Keratinocyte (primary cell): ENCODE measurements at regions of chr6 and their contacts with region 1.

Region 1: DNA sequence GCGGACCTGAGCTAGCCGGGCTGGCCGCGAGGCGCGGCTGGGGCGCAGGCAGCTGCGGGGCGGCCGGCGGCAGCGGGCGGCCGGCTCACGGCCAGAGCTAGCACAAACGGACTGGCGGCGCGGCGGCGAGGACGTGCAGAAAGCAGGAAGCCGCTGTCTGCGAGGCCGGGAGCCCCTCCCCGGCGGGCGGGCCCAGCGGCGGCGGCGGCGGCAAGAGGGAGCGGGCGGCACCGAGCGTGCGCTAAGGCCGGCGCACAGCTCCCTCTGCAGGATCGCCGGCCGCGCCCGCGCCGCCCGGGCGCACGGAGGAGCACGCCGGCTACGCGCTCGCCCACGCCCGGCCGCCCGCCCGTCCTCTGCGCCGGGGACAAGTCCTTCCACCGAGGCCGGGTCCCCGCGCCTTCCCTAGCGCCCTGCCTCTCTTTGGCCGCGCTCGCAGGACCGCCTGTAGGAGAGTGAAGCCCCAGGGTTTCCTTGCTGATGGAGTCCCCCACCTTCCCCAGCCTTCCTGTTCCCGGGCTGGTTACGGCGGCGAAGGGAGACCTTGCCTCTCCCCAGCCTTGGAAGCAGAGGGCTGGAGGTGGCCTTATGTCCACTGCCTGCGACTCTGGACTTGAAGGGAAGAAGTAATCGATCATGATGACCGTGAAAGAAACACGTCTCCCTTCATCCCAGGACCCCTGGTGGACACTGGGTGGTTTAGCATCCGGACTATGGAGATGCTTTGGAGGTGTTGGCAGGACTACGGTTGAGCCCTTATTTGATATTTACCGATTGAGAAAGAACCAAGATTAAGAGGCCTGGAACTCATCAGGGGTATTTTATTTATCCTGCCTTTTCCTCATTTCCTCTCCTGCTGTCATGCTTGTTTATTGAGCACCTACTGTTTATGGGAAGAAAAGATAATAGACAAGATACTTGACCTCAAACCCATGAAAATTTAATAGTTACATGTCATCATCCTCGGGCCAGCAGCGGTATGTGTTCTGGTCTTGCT is at the start of gene PREP:
- DNase-seq: no peak
- H3K4me3 ChIP-seq: peak within 1 kb of the TSS; percentile 79 to 92 (median 92)
- H3K27ac ChIP-seq: peak within 1 kb of the TSS; percentile 64
- H3K4me1 ChIP-seq: peaks cover 37% of the 10 kb centered on the region
- H3K27me3 ChIP-seq: no peaks in the 10 kb centered on the region
- CTCF ChIP-seq: peak; percentile 83 to 96 (median 83)
- polyA plus RNA-seq, gene PREP: 34.5 to 75.6 TPM (median 48.3 TPM) in 3 replicates

Region 2: GRCh38 chr6:105087571-105088211 is 315.5 kb before region 1 on chr6:
- dilution Hi-C with region 1: loop called (anchors 25 kb)
- DNase-seq: peak; percentile 15
- H3K4me3 ChIP-seq: no peak overlapping the region
- H3K27ac ChIP-seq: no peak overlapping the region
- H3K4me1 ChIP-seq: peaks cover 3% of the 10 kb centered on the region
- H3K27me3 ChIP-seq: no peaks in the 10 kb centered on the region
- CTCF ChIP-seq: peak in 2 of 3 experiments; percentile 63 to 66